ENCODE measurements at regions of chr7 and their contacts with region 1.

Region 1: GRCh38 chr7:16982640-16983350 is 101.0 kb upstream of the AGR3 start:
- DNase-seq: no peak
- ATAC-seq: peak; percentile 64
- H3K4me3 Mint-ChIP-seq: peak overlapping the region; percentile 30
- H3K27ac Mint-ChIP-seq: peak overlapping the region; percentile 15
- H3K4me1 Mint-ChIP-seq: peaks cover 7% of the 10 kb centered on the region
- H3K27me3 Mint-ChIP-seq: peaks cover 2% of the 10 kb centered on the region
- CTCF ChIP-seq: peak; percentile 57

Region 2: GRCh38 chr7:16926283-16926682 is 56.5 kb before region 1 on chr7:
- CTCF ChIA-PET with region 1: interaction called, 3 read pairs
- POLR2A ChIA-PET with region 1: no interaction called
- intact Hi-C with region 1: loop called (anchors 5 kb)
- DNase-seq: no peak
- ATAC-seq: peak; percentile 45
- H3K4me3 Mint-ChIP-seq: no peak overlapping the region
- H3K27ac Mint-ChIP-seq: no peak overlapping the region
- H3K4me1 Mint-ChIP-seq: peaks cover 41% of the 10 kb centered on the region
- H3K27me3 Mint-ChIP-seq: peaks cover 11% of the 10 kb centered on the region
- CTCF ChIP-seq: no peak

Region 3: GRCh38 chr7:17402628-17403278 is 420.0 kb after region 1 on chr7:
- CTCF ChIA-PET with region 1: no interaction called
- POLR2A ChIA-PET with region 1: no interaction called
- intact Hi-C with region 1: loop called (anchors 5 kb)
- DNase-seq: no peak
- ATAC-seq: no peak
- H3K4me3 Mint-ChIP-seq: peak overlapping the region; percentile 60
- H3K27ac Mint-ChIP-seq: peak overlapping the region; percentile 78
- H3K4me1 Mint-ChIP-seq: peaks cover 22% of the 10 kb centered on the region
- H3K27me3 Mint-ChIP-seq: no peaks in the 10 kb centered on the region
- CTCF ChIP-seq: no peak

Region 4: GRCh38 chr7:17530741-17531417 is 548.1 kb after region 1 on chr7:
- CTCF ChIA-PET with region 1: interaction called, 4 read pairs
- POLR2A ChIA-PET with region 1: no interaction called
- intact Hi-C with region 1: loop called (anchors 1 kb)
- DNase-seq: no peak
- ATAC-seq: no peak
- H3K4me3 Mint-ChIP-seq: no peak overlapping the region
- H3K27ac Mint-ChIP-seq: no peak overlapping the region
- H3K4me1 Mint-ChIP-seq: no peaks in the 10 kb centered on the region
- H3K27me3 Mint-ChIP-seq: no peaks in the 10 kb centered on the region
- CTCF ChIP-seq: no peak

Region 5: DNA sequence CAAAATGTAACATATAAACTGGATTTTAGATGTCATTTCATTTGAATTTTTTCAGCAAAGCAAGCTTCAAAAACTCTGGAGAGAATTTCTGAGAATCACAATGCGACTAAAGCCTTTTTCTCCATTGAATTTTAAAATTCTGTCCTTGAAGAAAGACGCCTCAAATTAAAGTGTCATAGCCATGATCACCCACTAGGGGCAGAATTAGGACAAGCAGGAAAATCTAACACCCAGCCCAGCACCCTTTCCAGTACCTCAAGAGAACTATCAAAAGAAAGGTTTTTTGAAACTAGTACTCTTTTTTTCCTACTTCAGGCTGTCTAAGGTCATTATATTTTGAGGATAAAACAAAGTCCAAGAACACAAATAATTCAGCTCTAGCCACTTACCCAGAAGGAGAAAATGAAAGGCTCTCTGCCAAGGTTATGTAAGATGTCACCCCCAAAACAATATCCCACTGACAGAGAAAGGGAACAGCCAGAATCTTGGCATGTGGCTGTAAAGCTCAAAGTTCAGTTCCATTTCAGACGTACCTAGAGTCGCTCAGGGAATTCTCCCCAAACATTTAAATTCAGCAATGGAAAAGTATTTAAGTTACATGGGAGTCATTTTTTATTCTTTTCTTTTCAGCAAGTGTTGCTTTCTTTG is 658.1 kb after region 1 on chr7:
- CTCF ChIA-PET with region 1: interaction called, 5 read pairs
- POLR2A ChIA-PET with region 1: no interaction called
- intact Hi-C with region 1: loop called (anchors 1 kb)
- DNase-seq: no peak
- ATAC-seq: no peak
- H3K4me3 Mint-ChIP-seq: no peak overlapping the region
- H3K27ac Mint-ChIP-seq: no peak overlapping the region
- H3K4me1 Mint-ChIP-seq: no peaks in the 10 kb centered on the region
- H3K27me3 Mint-ChIP-seq: no peaks in the 10 kb centered on the region
- CTCF ChIP-seq: peak; percentile 71

Region 6: GRCh38 chr7:17646253-17646956 is 663.6 kb after region 1 on chr7:
- CTCF ChIA-PET with region 1: interaction called, 5 read pairs
- POLR2A ChIA-PET with region 1: no interaction called
- intact Hi-C with region 1: loop called (anchors 1 kb)
- DNase-seq: no peak
- ATAC-seq: no peak
- H3K4me3 Mint-ChIP-seq: no peak overlapping the region
- H3K27ac Mint-ChIP-seq: no peak overlapping the region
- H3K4me1 Mint-ChIP-seq: no peaks in the 10 kb centered on the region
- H3K27me3 Mint-ChIP-seq: no peaks in the 10 kb centered on the region
- CTCF ChIP-seq: no peak

Region 7: DNA sequence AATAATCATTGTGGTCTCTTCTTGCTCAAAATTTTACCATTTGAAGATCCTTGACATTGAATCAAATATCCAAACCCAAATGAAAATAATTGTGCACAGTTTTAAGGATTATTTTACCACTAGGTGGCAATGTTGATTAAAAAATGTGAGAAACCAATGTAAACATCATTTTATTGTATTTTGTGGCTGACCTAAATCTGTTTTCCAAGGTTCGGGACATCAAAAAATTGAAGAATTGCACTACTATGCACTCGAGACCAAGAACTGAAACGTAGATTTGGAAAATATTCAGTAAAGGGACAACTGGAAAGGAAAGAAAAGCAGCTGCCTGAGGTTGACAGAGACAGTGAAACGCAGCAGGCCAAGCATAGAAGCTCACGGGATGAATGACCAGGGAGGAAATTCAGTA is 698.2 kb after region 1 on chr7:
- CTCF ChIA-PET with region 1: interaction called, 5 read pairs
- POLR2A ChIA-PET with region 1: no interaction called
- intact Hi-C with region 1: loop called (anchors 2 kb)
- DNase-seq: no peak
- ATAC-seq: no peak
- H3K4me3 Mint-ChIP-seq: no peak overlapping the region
- H3K27ac Mint-ChIP-seq: no peak overlapping the region
- H3K4me1 Mint-ChIP-seq: no peaks in the 10 kb centered on the region
- H3K27me3 Mint-ChIP-seq: no peaks in the 10 kb centered on the region
- CTCF ChIP-seq: no peak